Right cardiac atrium (tissue), 5 donors: ENCODE measurements at regions of chr19 and their contacts with region 1.

Region 1: GRCh38 chr19:39671738-39672363 is 16.1 kb downstream of the LGALS16 start:
- DNase-seq: no peak
- ATAC-seq: peak in 1 of 2 donors; percentile 43
- H3K4me3 ChIP-seq: no peak overlapping the region
- H3K27ac ChIP-seq: no peak overlapping the region
- H3K4me1 ChIP-seq: no peaks in the 10 kb centered on the region
- H3K27me3 ChIP-seq: no peaks in the 10 kb centered on the region

Region 2: DNA sequence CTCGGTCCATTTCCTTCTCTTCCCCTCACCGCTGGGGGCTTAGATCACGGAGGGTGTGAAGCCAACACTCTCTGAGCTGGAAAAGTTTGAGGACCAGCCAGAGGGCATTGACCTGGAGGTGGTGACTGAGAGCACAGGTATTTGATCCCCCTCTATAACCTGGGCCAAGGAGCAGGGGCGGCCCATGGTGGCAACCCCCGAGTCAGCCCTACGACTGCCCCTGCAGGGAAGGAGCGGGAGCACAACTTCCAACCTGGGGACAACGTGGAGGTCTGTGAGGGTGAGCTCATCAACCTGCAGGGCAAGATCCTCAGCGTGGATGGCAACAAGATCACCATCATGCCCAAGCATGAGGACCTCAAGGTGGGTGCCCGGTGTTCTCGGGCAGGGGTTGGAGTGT is 202.8 kb before region 1 on chr19:
- intact Hi-C with region 1: loop called in 1 of 4 experiments (anchors 10 kb)
- DNase-seq: no peak
- ATAC-seq: no peak
- H3K4me3 ChIP-seq: no peak overlapping the region
- H3K27ac ChIP-seq: no peak overlapping the region
- H3K4me1 ChIP-seq: no peaks in the 10 kb centered on the region
- H3K27me3 ChIP-seq: no peaks in the 10 kb centered on the region

Region 3: DNA sequence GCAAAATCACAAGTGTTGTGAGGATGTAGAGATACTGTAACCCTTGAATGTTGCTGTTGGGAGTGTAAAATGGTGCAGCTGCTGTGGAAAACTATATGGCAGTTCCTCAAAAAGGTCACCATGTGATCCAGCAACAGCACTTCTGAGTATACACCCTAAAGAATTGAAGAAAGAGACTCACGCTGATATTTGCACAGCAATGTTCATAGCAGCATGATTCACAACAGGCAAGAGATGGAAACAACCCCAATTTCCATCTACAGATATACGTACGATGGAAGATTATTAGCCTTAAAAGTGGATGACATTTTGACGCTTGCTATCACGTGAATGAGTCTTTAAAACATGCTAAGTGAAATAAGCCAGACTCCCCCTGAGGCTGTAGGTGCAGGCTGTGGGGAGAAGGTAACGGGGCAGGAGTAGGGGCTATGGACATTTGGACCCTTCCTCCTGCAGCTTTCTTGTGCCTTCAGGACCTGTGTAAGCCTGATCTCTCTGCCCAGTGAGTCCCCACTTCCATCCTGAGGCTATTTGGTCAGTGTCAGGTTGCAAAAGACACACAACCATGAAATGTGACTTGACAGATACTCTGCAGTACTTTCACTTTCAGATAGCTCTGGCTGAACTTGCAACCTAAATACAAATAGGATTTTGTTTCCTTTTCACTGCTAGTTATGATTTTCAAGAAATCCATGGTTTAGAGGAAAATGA is 114.3 kb before region 1 on chr19:
- intact Hi-C with region 1: loop called in 3 of 4 experiments (anchors 5 kb)
- DNase-seq: no peak
- ATAC-seq: no peak
- H3K4me3 ChIP-seq: no peak overlapping the region
- H3K27ac ChIP-seq: no peak overlapping the region
- H3K4me1 ChIP-seq: no peaks in the 10 kb centered on the region
- H3K27me3 ChIP-seq: no peaks in the 10 kb centered on the region

Region 4: DNA sequence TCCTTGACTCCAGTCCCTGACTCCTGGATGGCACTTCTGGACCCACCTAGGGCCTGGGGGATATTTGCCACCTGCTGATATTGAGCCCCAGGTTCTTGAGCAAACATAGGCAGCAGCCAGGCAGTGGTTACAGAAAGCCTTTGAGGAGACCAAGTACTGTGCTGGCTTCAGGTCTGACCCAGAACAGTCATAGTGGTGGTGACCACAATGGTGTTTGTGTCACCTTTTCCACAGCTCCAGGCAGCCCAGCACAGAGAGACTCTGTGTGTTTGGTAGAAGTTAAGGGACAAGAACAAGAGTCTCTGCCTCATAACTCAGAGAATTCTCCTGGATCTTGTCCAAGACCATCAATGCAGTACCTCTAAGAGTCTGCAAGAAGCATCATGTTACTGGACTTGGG is 80.5 kb after region 1 on chr19:
- intact Hi-C with region 1: no loop called
- DNase-seq: no peak
- ATAC-seq: no peak
- H3K4me3 ChIP-seq: no peak overlapping the region
- H3K27ac ChIP-seq: no peak overlapping the region
- H3K4me1 ChIP-seq: no peaks in the 10 kb centered on the region
- H3K27me3 ChIP-seq: no peaks in the 10 kb centered on the region

Region 5: GRCh38 chr19:39824143-39825092 is 152.6 kb after region 1 on chr19:
- intact Hi-C with region 1: no loop called
- DNase-seq: peak; percentile 86 to 94 (median 91)
- ATAC-seq: peak; percentile 95 to 96
- H3K4me3 ChIP-seq: peak overlapping the region; percentile 76
- H3K27ac ChIP-seq: peak overlapping the region; percentile 94
- H3K4me1 ChIP-seq: peaks cover 2% of the 10 kb centered on the region
- H3K27me3 ChIP-seq: no peaks in the 10 kb centered on the region